Activated CD4-positive, alpha-beta memory T cell treated with anti-CD3 and anti-CD28 coated beads for 36 hours (primary cell): ENCODE measurements at regions of chr10 and their contacts with region 1.

Region 1: DNA sequence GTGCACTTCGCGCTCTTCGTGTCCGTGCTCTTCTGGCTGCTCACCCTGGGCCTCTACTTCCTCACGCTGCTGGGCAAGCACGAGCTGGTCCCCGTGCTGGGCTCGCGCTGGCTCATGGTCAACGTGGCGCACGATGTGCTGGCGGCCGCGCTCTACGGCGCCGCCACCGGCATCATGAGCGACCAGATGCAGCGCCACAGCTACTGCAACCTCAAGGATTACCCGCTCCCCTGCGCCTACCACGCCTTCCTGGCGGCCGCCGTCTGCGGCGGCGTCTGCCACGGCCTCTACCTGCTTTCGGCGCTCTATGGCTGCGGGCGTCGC is 480 bp downstream of the MARVELD1 start:
- DNase-seq: peak; percentile 69
- H3K4me3 Mint-ChIP-seq: peak overlapping the region; percentile 97
- H3K27ac Mint-ChIP-seq: peak overlapping the region; percentile 82
- H3K4me1 Mint-ChIP-seq: peaks cover 7% of the 10 kb centered on the region
- H3K27me3 Mint-ChIP-seq: peaks cover 5% of the 10 kb centered on the region

Region 2: GRCh38 chr10:97676770-97677581 is 37.0 kb before region 1 on chr10:
- CTCF ChIA-PET with region 1: interaction called, 11 read pairs
- POLR2A ChIA-PET with region 1: no interaction called
- intact Hi-C with region 1: no loop called
- DNase-seq: peak; percentile 51
- H3K4me3 Mint-ChIP-seq: no peak overlapping the region
- H3K27ac Mint-ChIP-seq: no peak overlapping the region
- H3K4me1 Mint-ChIP-seq: peaks cover 6% of the 10 kb centered on the region
- H3K27me3 Mint-ChIP-seq: no peaks in the 10 kb centered on the region

Region 3: GRCh38 chr10:97701438-97702069 is 12.5 kb before region 1 on chr10:
- CTCF ChIA-PET with region 1: interaction called, 37 read pairs
- POLR2A ChIA-PET with region 1: no interaction called
- intact Hi-C with region 1: no loop called
- DNase-seq: peak; percentile 62
- H3K4me3 Mint-ChIP-seq: no peak overlapping the region
- H3K27ac Mint-ChIP-seq: no peak overlapping the region
- H3K4me1 Mint-ChIP-seq: no peaks in the 10 kb centered on the region
- H3K27me3 Mint-ChIP-seq: peaks cover 4% of the 10 kb centered on the region

Region 4: GRCh38 chr10:97731346-97732051 is 17.5 kb after region 1 on chr10:
- CTCF ChIA-PET with region 1: interaction called, 588 read pairs
- POLR2A ChIA-PET with region 1: interaction called, 4 read pairs
- intact Hi-C with region 1: loop called (anchors 1 kb)
- DNase-seq: peak; percentile 63
- H3K4me3 Mint-ChIP-seq: no peak overlapping the region
- H3K27ac Mint-ChIP-seq: no peak overlapping the region
- H3K4me1 Mint-ChIP-seq: peaks cover 10% of the 10 kb centered on the region
- H3K27me3 Mint-ChIP-seq: peaks cover 8% of the 10 kb centered on the region

Region 5: GRCh38 chr10:97736902-97737769 is 23.1 kb after region 1 on chr10 and contains the start of gene ZFYVE27:
- CTCF ChIA-PET with region 1: interaction called, 588 read pairs
- POLR2A ChIA-PET with region 1: interaction called, 4 read pairs
- intact Hi-C with region 1: no loop called
- DNase-seq: peak; percentile 98
- H3K4me3 Mint-ChIP-seq: peak within 1 kb of the TSS; percentile 95
- H3K27ac Mint-ChIP-seq: peak within 1 kb of the TSS; percentile 89
- H3K4me1 Mint-ChIP-seq: peaks cover 41% of the 10 kb centered on the region
- H3K27me3 Mint-ChIP-seq: no peaks in the 10 kb centered on the region
- total RNA-seq, gene ZFYVE27: 20.9 to 22.8 TPM

Region 6: GRCh38 chr10:97759158-97759887 is 45.3 kb after region 1 on chr10:
- CTCF ChIA-PET with region 1: no interaction called
- POLR2A ChIA-PET with region 1: no interaction called
- intact Hi-C with region 1: no loop called
- DNase-seq: peak; percentile 58
- H3K4me3 Mint-ChIP-seq: no peak overlapping the region
- H3K27ac Mint-ChIP-seq: no peak overlapping the region
- H3K4me1 Mint-ChIP-seq: no peaks in the 10 kb centered on the region
- H3K27me3 Mint-ChIP-seq: no peaks in the 10 kb centered on the region